ENCODE measurements at regions of chr14 and their contacts with region 1.

Region 1: DNA sequence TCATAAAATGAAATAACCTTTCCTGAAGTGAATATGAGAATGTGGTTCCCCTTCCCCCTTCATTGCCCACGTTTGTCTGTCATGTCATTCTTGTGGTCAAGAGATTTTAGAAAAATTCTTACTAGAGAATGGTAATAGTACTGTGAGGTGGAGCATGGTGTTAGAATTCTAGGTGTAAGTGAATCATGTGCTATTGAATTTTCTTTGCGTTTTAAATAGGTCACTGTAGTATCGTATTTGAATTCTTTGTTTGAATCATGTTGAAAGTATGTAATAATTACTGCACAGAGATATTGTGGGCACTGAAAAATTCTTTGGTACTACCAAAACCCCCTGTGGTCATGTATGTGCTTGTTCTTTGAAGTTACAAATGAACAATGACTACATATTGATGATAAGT is 49.9 kb downstream of the FUT8 start:
- DNase-seq: no peak
- H3K4me3 Mint-ChIP-seq: peak overlapping the region; percentile 5
- H3K27ac Mint-ChIP-seq: peak overlapping the region; percentile 63
- H3K4me1 Mint-ChIP-seq: peaks cover 41% of the 10 kb centered on the region
- H3K27me3 Mint-ChIP-seq: no peaks in the 10 kb centered on the region

Region 2: GRCh38 chr14:65438266-65438933 is 24.0 kb before region 1 on chr14:
- intact Hi-C with region 1: loop called (anchors 1 kb)
- DNase-seq: no peak
- H3K4me3 Mint-ChIP-seq: peak overlapping the region; percentile 38
- H3K27ac Mint-ChIP-seq: peak overlapping the region; percentile 90
- H3K4me1 Mint-ChIP-seq: peaks cover 46% of the 10 kb centered on the region
- H3K27me3 Mint-ChIP-seq: no peaks in the 10 kb centered on the region

Region 3: DNA sequence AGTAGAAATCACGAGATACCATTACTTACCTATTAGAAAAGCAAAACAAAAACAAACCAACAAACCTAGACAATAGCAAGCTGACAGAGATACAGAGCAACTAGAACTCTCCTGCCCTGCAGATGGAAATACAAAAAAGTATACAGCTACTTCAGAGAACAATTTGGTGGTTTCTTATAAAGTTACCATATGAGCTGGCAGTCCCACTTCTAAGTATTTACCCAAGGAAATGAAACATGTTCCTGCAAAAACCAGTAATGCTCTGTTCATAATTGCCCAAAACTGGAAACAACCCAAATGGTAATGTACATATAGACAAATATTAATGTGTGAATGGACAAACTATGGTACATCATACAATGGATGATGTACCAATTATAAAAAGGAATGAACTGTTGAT is 18.2 kb before region 1 on chr14:
- intact Hi-C with region 1: loop called (anchors 1 kb)
- DNase-seq: no peak
- H3K4me3 Mint-ChIP-seq: peak overlapping the region; percentile 0
- H3K27ac Mint-ChIP-seq: peak overlapping the region; percentile 67
- H3K4me1 Mint-ChIP-seq: peaks cover 44% of the 10 kb centered on the region
- H3K27me3 Mint-ChIP-seq: no peaks in the 10 kb centered on the region

Measured in activated T-helper 1 cell treated with anti-CD3 and anti-CD28 coated beads, Interleukin-12 subunit alpha, Interleukin-12 subunit beta, Interleukin-2, Interleukin-4 antibody, amounts not matched to agents 30 ng/mL and 10 ng/mL and 1 ng/mL, durations not matched to agents 14 hours and 24 hours and 36 hours (primary cell).